MCF 10A (cell line): ENCODE measurements at regions of chr11 and their contacts with region 1.

Region 1: GRCh38 chr11:2532704-2533586 is 88.1 kb downstream of the KCNQ1 start:
- DNase-seq: peak; percentile 89
- H3K4me3 Mint-ChIP-seq: peak overlapping the region; percentile 64
- H3K27ac Mint-ChIP-seq: peak overlapping the region; percentile 42
- H3K4me1 Mint-ChIP-seq: peaks cover 19% of the 10 kb centered on the region
- H3K27me3 Mint-ChIP-seq: no peaks in the 10 kb centered on the region
- CTCF ChIP-seq: peak; percentile 98

Region 2: GRCh38 chr11:2196970-2197770 is 335.8 kb before region 1 on chr11:
- CTCF ChIA-PET with region 1: interaction called, 10 read pairs
- POLR2A ChIA-PET with region 1: no interaction called
- intact Hi-C with region 1: loop called (anchors 5 kb)
- DNase-seq: peak; percentile 70
- H3K4me3 Mint-ChIP-seq: no peak overlapping the region
- H3K27ac Mint-ChIP-seq: no peak overlapping the region
- H3K4me1 Mint-ChIP-seq: peaks cover 26% of the 10 kb centered on the region
- H3K27me3 Mint-ChIP-seq: peaks cover 21% of the 10 kb centered on the region
- CTCF ChIP-seq: peak; percentile 94

Region 3: GRCh38 chr11:2400069-2400760 is 132.7 kb before region 1 on chr11 and contains the start of gene TSSC4:
- CTCF ChIA-PET with region 1: interaction called, 22 read pairs
- POLR2A ChIA-PET with region 1: interaction called, 4 read pairs
- intact Hi-C with region 1: no loop called
- DNase-seq: peak; percentile 100
- H3K4me3 Mint-ChIP-seq: peak within 1 kb of the TSS; percentile 86
- H3K27ac Mint-ChIP-seq: peak within 1 kb of the TSS; percentile 94
- H3K4me1 Mint-ChIP-seq: no peaks in the 10 kb centered on the region
- H3K27me3 Mint-ChIP-seq: no peaks in the 10 kb centered on the region
- CTCF ChIP-seq: peak; percentile 95
- total RNA-seq, gene TSSC4: 69.9 and 70.3 TPM in 2 replicates

Region 4: DNA sequence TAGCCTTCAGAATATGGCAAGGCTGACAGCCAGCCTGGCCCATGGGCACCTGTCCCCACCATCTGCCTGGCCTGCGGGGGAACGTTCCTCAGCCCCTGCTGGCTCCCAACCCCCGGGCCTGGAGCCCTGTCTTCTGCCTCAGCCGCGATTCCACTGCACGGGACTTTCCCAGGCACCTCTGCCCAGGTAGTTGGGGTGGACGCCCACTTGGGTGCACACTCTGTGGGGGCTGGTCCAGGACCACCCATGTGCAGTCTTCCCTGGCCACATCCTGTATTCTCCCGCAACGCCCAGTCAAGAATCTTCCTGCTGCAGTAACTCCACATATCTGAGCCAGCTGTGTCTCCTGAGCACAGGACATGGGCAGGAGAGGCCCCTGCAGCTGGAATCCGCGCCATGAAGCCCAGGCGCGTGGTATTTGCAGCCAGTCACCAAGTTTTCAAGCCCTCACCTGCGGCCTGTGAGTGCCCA is 10.2 kb before region 1 on chr11:
- CTCF ChIA-PET with region 1: no interaction called
- POLR2A ChIA-PET with region 1: no interaction called
- intact Hi-C with region 1: no loop called
- DNase-seq: no peak
- H3K4me3 Mint-ChIP-seq: no peak overlapping the region
- H3K27ac Mint-ChIP-seq: no peak overlapping the region
- H3K4me1 Mint-ChIP-seq: no peaks in the 10 kb centered on the region
- H3K27me3 Mint-ChIP-seq: peaks cover 28% of the 10 kb centered on the region
- CTCF ChIP-seq: no peak

Region 5: GRCh38 chr11:2666401-2666741 is 133.4 kb after region 1 on chr11:
- CTCF ChIA-PET with region 1: no interaction called
- POLR2A ChIA-PET with region 1: no interaction called
- intact Hi-C with region 1: no loop called
- DNase-seq: no peak
- H3K4me3 Mint-ChIP-seq: no peak overlapping the region
- H3K27ac Mint-ChIP-seq: no peak overlapping the region
- H3K4me1 Mint-ChIP-seq: no peaks in the 10 kb centered on the region
- H3K27me3 Mint-ChIP-seq: no peaks in the 10 kb centered on the region
- CTCF ChIP-seq: no peak

Region 6: DNA sequence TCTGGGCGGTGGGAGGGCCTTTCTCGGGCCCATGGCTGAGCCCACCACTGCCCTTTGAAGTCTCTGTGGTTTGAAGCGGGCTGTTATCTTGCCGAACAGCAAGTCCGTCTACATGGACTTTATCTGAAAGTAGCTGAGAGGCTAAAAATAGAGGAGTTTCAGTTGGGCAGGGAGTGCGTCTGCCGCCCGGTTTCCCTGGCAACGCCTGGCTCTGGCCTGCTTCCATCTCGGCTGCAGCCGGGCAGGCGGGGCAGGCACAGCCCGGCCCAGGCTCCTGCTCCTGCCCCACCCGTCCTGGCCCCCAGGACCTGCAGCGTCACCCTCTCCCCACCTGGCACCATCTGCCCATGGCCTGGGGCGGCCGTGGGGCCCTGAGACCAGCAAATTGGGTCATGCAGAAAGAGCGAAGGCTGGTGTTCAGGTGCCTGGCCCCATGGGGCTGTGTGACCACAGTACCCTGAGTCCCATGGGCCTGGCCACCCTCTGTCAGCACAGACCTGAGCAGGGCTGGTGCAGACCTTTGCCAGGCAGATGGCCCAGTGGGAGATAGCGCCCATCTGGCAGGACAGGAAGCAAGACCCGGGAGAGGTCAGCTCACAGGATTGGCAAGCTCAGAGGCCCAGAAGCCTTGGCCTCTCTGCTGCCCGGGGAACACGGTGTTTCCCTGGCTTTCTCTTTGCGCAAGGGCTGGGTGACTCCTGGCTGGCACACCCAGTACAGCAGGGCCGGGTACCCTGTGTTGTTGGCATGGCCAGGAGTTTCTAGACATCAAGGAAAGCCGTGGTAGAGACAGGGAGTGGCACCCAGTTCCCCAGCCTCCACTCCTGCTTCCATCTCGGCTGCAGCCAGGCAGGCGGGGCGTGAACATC is 245.9 kb after region 1 on chr11:
- CTCF ChIA-PET with region 1: interaction called, 14 read pairs
- POLR2A ChIA-PET with region 1: interaction called, 3 read pairs
- intact Hi-C with region 1: loop called (anchors 1 kb)
- DNase-seq: peak; percentile 97
- H3K4me3 Mint-ChIP-seq: peak overlapping the region; percentile 58
- H3K27ac Mint-ChIP-seq: peak overlapping the region; percentile 97
- H3K4me1 Mint-ChIP-seq: peaks cover 15% of the 10 kb centered on the region
- H3K27me3 Mint-ChIP-seq: peaks cover 4% of the 10 kb centered on the region
- CTCF ChIP-seq: peak; percentile 42

Region 7: DNA sequence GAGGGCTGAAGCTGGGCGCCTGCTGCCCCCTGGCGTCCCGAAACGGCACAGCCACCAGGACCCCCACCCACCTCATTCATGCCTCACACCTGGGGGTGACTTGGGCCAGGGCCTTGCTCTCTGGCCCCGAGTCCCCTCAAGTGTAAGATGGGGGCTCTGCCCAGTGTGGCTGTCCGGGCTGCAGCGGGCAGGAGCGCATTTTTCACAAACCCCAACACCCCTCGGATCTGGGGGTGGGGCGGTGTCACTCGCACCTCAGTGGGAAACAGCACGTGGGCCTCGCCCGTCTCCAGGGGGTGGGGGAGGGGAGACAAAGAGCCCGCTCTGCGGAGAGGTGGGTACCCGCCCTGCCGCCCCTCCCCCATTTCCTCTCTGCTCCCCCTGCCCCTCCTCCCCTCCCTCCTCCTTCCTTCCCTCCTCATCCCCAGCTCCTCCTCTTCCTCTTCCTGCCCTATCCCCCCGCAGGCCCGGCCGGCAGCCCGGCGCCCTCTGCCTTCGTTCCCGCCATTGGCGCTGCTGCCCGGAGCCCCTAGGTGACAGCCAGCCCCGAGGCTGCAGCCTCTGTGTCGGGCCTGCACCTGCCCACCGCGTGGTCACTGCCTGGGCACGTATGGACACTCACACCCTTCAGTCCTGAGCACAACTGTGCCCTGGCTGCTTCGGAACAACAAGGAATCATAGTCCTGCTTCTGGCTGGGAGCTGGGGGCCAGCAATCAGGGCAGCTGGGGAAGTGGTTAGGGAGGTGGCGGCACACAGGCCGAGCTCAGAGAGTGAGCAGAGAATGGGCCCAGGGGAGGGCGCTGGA is 359.5 kb after region 1 on chr11:
- CTCF ChIA-PET with region 1: interaction called, 443 read pairs
- POLR2A ChIA-PET with region 1: interaction called, 68 read pairs
- intact Hi-C with region 1: loop called (anchors 1 kb)
- DNase-seq: peak; percentile 28
- H3K4me3 Mint-ChIP-seq: peak overlapping the region; percentile 48
- H3K27ac Mint-ChIP-seq: peak overlapping the region; percentile 73
- H3K4me1 Mint-ChIP-seq: peaks cover 5% of the 10 kb centered on the region
- H3K27me3 Mint-ChIP-seq: no peaks in the 10 kb centered on the region
- CTCF ChIP-seq: peak; percentile 92